A549 (cell line): ENCODE measurements at regions of chr15 and their contacts with region 1.

Region 1: GRCh38 chr15:23039151-23039916 is at the start of gene TUBGCP5:
- DNase-seq: peak; percentile 96 to 99
- ATAC-seq: peak; percentile 94 to 97
- H3K4me3 ChIP-seq: peak within 1 kb of the TSS; percentile 72
- H3K27ac ChIP-seq: peak within 1 kb of the TSS; percentile 85 to 98
- H3K4me1 ChIP-seq: peaks cover 13% of the 10 kb centered on the region
- CTCF ChIP-seq: no peak
- EP300 ChIP-seq: no peak
- POLR2A ChIP-seq: peak; percentile 98
- RAD21 ChIP-seq: no peak; a peak in 1 of 5 replicates
- polyA plus RNA-seq, gene TUBGCP5: 35.5 and 41.0 TPM in 2 replicates

Region 2: GRCh38 chr15:22786868-22787698 is 252.3 kb before region 1 on chr15:
- CTCF ChIA-PET with region 1: no interaction called
- POLR2A ChIA-PET with region 1: no interaction called
- DNase-seq: peak; percentile 17 to 38
- ATAC-seq: peak; percentile 54 to 69
- H3K4me3 ChIP-seq: peak overlapping the region; percentile 61
- H3K27ac ChIP-seq: peak overlapping the region; percentile 85 to 97
- H3K4me1 ChIP-seq: 0 out of 3 replicates have a peak, but pooled peaks cover 3% of the 10 kb centered on the region
- CTCF ChIP-seq: no peak
- EP300 ChIP-seq: no peak
- POLR2A ChIP-seq: no peak
- RAD21 ChIP-seq: no peak

Region 3: GRCh38 chr15:22969489-22969888 is 69.8 kb before region 1 on chr15:
- CTCF ChIA-PET with region 1: no interaction called
- POLR2A ChIA-PET with region 1: no interaction called
- DNase-seq: no peak
- ATAC-seq: no peak
- H3K4me3 ChIP-seq: no peak overlapping the region
- H3K27ac ChIP-seq: no peak overlapping the region
- H3K4me1 ChIP-seq: peaks cover 16% of the 10 kb centered on the region
- CTCF ChIP-seq: no peak
- EP300 ChIP-seq: no peak
- POLR2A ChIP-seq: no peak
- RAD21 ChIP-seq: no peak

Region 4: DNA sequence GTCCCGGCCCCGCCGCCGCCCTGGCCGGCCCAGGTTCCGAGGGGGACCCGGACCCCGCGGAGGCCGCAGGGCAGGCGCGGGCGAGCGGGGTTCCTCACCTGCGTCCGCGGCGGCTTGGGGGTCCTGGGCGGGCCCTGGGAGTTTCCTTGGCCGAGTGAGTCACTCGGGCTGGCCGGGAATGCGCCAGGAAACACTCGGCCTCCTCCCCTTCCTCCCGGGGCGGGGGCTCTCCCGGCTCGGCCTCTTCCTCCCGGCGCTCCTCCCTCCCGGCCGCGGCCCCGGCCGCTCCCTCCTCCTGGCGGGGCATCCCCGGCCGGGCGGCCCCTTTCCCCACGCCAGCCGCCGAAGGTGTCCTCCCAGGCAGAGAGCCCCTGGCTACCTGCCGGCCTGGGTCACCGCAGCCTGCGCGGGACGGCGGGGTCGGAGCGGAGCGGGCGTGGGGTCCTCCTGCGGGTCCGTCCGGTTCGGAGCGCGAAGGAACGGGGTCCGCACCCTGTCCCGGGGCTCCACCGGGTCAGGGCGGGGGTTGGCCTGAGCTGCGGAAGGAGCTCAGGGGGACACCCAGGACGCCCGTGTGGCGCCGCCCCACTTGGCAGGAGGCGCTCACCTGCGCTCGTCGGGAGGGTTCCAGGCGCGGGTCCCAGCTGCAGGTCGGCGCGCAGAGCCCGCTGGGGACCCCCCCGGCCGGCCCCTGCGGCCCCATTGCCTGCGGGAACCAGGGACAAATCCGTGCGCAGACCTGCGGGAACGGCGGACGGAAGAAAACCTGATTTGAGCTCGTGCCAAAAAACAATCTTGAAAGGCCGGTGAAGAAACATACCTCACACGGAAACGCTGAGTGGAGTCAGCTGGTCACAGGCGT is 58.9 kb before region 1 on chr15 and contains the start of gene CYFIP1:
- CTCF ChIA-PET with region 1: interaction called, 4 read pairs
- POLR2A ChIA-PET with region 1: interaction called, 17 read pairs
- DNase-seq: peak; percentile 84 to 96
- ATAC-seq: peak; percentile 91 to 92
- H3K4me3 ChIP-seq: peak within 1 kb of the TSS; percentile 85
- H3K27ac ChIP-seq: peak within 1 kb of the TSS; percentile 84 to 95
- H3K4me1 ChIP-seq: peaks cover 9% of the 10 kb centered on the region
- CTCF ChIP-seq: no peak
- EP300 ChIP-seq: no peak
- POLR2A ChIP-seq: peak; percentile 74
- RAD21 ChIP-seq: no peak
- polyA plus RNA-seq, gene CYFIP1: 68.2 and 83.3 TPM in 2 replicates

Region 5: DNA sequence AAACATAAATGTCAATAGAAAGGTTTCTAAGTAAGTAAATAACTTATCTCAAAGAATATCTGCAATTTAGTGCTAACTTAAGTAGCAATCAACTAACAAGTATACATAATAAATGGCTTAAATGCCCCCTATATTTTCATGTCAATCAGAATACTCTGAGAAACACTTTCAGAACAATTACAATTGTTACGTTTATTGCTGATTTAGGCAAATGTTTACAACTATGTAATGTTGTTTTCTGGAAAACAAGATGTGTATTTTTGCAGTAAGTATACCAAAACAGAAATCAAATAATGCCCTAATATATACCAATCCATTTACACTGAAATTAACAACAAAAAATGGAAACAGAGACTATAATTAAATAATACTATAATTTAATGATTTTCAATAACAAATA is 13.1 kb before region 1 on chr15:
- CTCF ChIA-PET with region 1: interaction called, 35 read pairs
- POLR2A ChIA-PET with region 1: interaction called, 34 read pairs
- DNase-seq: no peak
- ATAC-seq: no peak
- H3K4me3 ChIP-seq: no peak overlapping the region
- H3K27ac ChIP-seq: no peak overlapping the region
- H3K4me1 ChIP-seq: no peaks in the 10 kb centered on the region
- CTCF ChIP-seq: no peak
- EP300 ChIP-seq: no peak
- POLR2A ChIP-seq: no peak
- RAD21 ChIP-seq: no peak

Region 6: GRCh38 chr15:23467110-23467600 is 427.8 kb after region 1 on chr15:
- CTCF ChIA-PET with region 1: interaction called, 13 read pairs
- POLR2A ChIA-PET with region 1: interaction called, 5 read pairs
- DNase-seq: peak; percentile 44 to 65
- ATAC-seq: peak; percentile 85 to 86; a peak in 5 of 6 replicates
- H3K4me3 ChIP-seq: no peak overlapping the region
- H3K27ac ChIP-seq: peak overlapping the region; percentile 5 to 61; a peak in 2 of 6 replicates
- H3K4me1 ChIP-seq: peaks cover 12% of the 10 kb centered on the region
- CTCF ChIP-seq: peak; percentile 78
- EP300 ChIP-seq: no peak
- POLR2A ChIP-seq: no peak
- RAD21 ChIP-seq: peak; percentile 82 to 90